Activated B cell treated with CpG ODN at 0.5 μM for 24 hours (primary cell): ENCODE measurements at regions of chr19 and their contacts with region 1.

Region 1: GRCh38 chr19:48321622-48322591 is 3.4 kb upstream of the EMP3 start:
- DNase-seq: peak; percentile 99
- ATAC-seq: peak; percentile 66
- H3K4me3 Mint-ChIP-seq: peak overlapping the region; percentile 94
- H3K27ac Mint-ChIP-seq: peak overlapping the region; percentile 99
- H3K4me1 Mint-ChIP-seq: peaks cover 63% of the 10 kb centered on the region
- H3K27me3 Mint-ChIP-seq: no peaks in the 10 kb centered on the region
- CTCF ChIP-seq: no peak

Region 2: GRCh38 chr19:48271531-48272151 is 50.3 kb before region 1 on chr19:
- CTCF ChIA-PET with region 1: interaction called, 3 read pairs
- POLR2A ChIA-PET with region 1: interaction called, 6 read pairs
- intact Hi-C with region 1: loop called (anchors 1 kb)
- DNase-seq: peak; percentile 37
- ATAC-seq: peak; percentile 75
- H3K4me3 Mint-ChIP-seq: peak overlapping the region; percentile 95
- H3K27ac Mint-ChIP-seq: peak overlapping the region; percentile 80
- H3K4me1 Mint-ChIP-seq: peaks cover 14% of the 10 kb centered on the region
- H3K27me3 Mint-ChIP-seq: no peaks in the 10 kb centered on the region
- CTCF ChIP-seq: no peak

Region 3: DNA sequence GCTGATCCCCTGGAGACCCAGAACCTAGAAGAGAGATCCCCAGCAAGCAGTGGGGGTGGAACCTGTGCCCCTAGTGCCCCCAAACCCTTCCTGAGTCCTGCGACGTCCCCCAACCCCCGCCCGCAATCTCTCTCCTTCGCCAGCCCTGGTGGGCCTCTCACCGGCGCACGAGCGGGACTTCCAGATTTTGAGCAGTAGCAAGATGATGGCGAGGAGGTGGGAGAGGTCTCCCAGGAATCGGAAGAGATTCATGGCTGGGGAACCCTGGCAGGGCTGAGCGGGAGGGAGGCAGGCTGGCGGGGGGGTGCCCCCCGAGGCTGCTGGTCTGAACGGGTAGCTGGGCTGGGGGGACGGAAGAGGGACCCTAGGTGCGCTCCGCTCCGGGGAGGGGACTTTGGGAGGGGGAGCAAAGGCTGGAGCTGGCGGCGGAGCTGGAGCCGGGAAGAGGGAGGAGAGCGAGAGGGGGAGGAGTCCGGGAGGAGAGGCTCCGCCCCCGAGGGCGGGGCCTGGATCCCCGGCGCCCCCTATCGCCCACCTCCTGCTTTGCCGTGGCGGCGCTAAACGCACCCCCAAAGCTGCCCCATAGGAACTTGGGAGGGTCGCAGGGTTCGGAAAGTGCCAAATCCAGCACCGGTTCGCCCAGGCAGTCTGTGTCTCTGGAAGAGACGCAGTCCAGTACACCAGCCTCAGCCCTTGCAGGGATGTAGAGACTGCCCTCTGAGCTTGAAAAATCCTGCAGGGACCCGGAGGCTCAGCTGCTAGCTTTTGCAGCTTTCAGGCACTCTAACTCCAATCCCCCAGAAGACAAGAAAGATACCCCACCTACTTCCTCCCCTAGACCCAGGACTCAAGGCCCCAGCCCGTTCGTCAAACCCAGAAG is 69.4 kb after region 1 on chr19 and contains the start of gene KDELR1:
- CTCF ChIA-PET with region 1: interaction called, 6 read pairs
- POLR2A ChIA-PET with region 1: interaction called, 24 read pairs
- intact Hi-C with region 1: no loop called
- DNase-seq: peak; percentile 83
- ATAC-seq: peak; percentile 84
- H3K4me3 Mint-ChIP-seq: peak within 1 kb of the TSS; percentile 96
- H3K27ac Mint-ChIP-seq: peak within 1 kb of the TSS; percentile 88
- H3K4me1 Mint-ChIP-seq: peaks cover 35% of the 10 kb centered on the region
- H3K27me3 Mint-ChIP-seq: peaks cover 19% of the 10 kb centered on the region
- CTCF ChIP-seq: peak; percentile 51
- total RNA-seq, gene KDELR1: 50.8 and 51.9 TPM in 2 replicates

Region 4: DNA sequence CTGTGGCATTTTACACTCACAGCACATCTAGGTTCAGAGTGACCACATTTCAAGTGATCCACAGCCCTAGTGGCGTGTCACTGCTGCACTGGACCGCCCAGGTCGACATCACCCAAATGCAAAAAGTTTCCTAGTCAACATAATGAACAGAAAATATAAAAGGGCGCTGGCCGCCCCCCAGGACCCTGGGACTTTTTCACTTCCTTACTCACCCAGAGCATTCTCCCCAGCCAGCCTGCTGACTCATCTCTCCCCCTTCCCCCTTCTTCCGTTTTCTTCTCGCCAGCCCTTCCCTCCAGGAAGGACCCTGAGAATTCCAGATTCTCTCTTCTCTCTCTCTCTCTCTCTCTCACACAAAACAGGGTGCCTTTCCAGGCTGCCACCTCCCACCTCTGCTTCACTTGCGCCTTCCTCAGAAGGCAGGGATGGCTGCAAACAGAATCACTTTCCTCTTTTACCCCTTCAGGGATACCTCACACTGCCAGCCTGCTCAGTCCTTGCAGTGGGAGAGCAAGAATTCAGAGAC is 102.8 kb after region 1 on chr19:
- CTCF ChIA-PET with region 1: no interaction called
- POLR2A ChIA-PET with region 1: no interaction called
- intact Hi-C with region 1: no loop called
- DNase-seq: no peak
- ATAC-seq: peak; percentile 77
- H3K4me3 Mint-ChIP-seq: peak overlapping the region; percentile 20
- H3K27ac Mint-ChIP-seq: peak overlapping the region; percentile 13
- H3K4me1 Mint-ChIP-seq: peaks cover 6% of the 10 kb centered on the region
- H3K27me3 Mint-ChIP-seq: peaks cover 5% of the 10 kb centered on the region
- CTCF ChIP-seq: no peak

Region 5: DNA sequence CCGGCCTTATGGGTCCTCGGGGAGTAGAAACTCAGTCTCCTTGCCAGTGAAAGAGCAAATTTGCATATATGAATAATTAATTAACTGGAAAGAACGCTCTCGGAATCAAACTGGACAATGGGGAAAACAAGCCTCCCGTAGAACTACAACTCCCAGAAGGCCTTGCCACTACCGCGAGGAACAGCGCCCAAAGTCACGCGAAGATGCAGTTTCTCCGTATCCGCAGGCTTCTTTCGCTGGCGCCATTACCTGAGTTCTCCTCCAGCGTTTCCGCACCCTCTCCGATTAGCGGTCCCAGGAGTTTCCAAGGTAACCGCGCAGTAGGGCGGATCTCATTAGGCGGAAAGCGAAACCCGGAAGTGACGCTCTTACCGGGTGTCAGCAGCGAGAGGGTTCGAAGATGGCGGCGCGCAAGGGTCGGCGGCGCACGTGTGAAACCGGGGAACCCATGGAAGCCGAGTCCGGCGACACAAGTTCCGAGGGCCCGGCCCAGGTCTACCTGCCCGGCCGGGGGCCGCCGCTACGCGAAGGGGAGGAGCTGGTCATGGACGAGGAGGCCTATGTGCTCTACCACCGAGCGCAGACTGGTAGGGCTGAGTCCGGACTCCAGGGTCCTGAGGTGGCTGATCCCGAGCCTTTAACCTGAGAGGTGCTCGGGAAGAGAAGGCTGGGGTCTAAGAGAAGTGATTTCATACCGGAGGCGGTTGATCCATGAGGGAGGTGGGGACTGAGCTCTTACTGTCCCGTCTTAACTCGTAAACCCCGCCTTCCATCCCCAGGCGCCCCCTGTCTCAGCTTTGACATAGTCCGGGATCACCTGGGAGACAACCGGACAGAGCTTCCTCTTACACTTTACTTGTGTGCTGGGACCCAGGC is 123.9 kb after region 1 on chr19 and contains the start of gene GRWD1:
- CTCF ChIA-PET with region 1: no interaction called
- POLR2A ChIA-PET with region 1: interaction called, 7 read pairs
- intact Hi-C with region 1: loop called (anchors 1 kb)
- DNase-seq: peak; percentile 78
- ATAC-seq: peak; percentile 89
- H3K4me3 Mint-ChIP-seq: peak within 1 kb of the TSS; percentile 96
- H3K27ac Mint-ChIP-seq: peak within 1 kb of the TSS; percentile 95
- H3K4me1 Mint-ChIP-seq: peaks cover 35% of the 10 kb centered on the region
- H3K27me3 Mint-ChIP-seq: peaks cover 19% of the 10 kb centered on the region
- CTCF ChIP-seq: no peak
- total RNA-seq, gene GRWD1: 63.4 and 71.4 TPM in 2 replicates

Region 6: GRCh38 chr19:48492925-48493717 is 171.2 kb after region 1 on chr19:
- CTCF ChIA-PET with region 1: no interaction called
- POLR2A ChIA-PET with region 1: interaction called, 3 read pairs
- intact Hi-C with region 1: loop called (anchors 2 kb)
- DNase-seq: peak; percentile 71
- ATAC-seq: peak; percentile 69
- H3K4me3 Mint-ChIP-seq: peak overlapping the region; percentile 74
- H3K27ac Mint-ChIP-seq: no peak overlapping the region
- H3K4me1 Mint-ChIP-seq: peaks cover 42% of the 10 kb centered on the region
- H3K27me3 Mint-ChIP-seq: peaks cover 33% of the 10 kb centered on the region
- CTCF ChIP-seq: no peak

Region 7: GRCh38 chr19:48513289-48514122 is 191.6 kb after region 1 on chr19:
- CTCF ChIA-PET with region 1: no interaction called
- POLR2A ChIA-PET with region 1: no interaction called
- intact Hi-C with region 1: no loop called
- DNase-seq: peak; percentile 51
- ATAC-seq: peak; percentile 90
- H3K4me3 Mint-ChIP-seq: no peak overlapping the region
- H3K27ac Mint-ChIP-seq: peak overlapping the region; percentile 69
- H3K4me1 Mint-ChIP-seq: peaks cover 17% of the 10 kb centered on the region
- H3K27me3 Mint-ChIP-seq: peaks cover 2% of the 10 kb centered on the region
- CTCF ChIP-seq: no peak

Region 8: DNA sequence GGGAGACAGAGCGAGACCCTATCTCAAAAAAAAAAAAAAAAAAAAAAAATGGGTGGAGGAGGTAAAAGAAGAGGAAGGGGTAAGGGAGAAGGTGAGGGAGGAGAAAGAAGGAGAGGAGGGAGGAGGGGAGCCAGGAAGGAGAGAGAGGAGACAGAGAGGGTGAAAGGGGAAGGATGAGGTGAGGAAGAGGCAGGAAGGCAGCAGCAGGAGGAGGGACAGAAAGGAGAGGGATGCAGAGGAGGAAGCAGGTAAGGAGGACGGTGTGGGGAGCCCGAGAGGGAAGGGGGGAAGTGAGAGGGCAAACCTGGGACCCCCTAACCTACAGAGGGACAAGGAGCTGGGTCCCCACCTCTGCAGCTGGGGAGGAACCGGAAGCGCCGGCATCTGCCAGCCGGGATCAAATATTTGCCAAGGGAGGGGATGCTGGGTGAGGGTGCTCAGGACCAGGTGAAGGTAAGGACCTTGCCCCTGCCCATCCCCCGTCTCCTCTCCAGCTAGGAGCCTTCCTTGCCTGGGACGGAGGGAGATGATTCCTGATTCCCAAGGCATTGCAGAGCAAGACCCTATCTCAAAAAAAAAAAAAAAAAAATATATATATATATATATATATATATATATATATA is 280.3 kb after region 1 on chr19:
- CTCF ChIA-PET with region 1: no interaction called
- POLR2A ChIA-PET with region 1: no interaction called
- intact Hi-C with region 1: no loop called
- DNase-seq: no peak
- ATAC-seq: no peak
- H3K4me3 Mint-ChIP-seq: no peak overlapping the region
- H3K27ac Mint-ChIP-seq: no peak overlapping the region
- H3K4me1 Mint-ChIP-seq: no peaks in the 10 kb centered on the region
- H3K27me3 Mint-ChIP-seq: no peaks in the 10 kb centered on the region
- CTCF ChIP-seq: no peak

Region 9: DNA sequence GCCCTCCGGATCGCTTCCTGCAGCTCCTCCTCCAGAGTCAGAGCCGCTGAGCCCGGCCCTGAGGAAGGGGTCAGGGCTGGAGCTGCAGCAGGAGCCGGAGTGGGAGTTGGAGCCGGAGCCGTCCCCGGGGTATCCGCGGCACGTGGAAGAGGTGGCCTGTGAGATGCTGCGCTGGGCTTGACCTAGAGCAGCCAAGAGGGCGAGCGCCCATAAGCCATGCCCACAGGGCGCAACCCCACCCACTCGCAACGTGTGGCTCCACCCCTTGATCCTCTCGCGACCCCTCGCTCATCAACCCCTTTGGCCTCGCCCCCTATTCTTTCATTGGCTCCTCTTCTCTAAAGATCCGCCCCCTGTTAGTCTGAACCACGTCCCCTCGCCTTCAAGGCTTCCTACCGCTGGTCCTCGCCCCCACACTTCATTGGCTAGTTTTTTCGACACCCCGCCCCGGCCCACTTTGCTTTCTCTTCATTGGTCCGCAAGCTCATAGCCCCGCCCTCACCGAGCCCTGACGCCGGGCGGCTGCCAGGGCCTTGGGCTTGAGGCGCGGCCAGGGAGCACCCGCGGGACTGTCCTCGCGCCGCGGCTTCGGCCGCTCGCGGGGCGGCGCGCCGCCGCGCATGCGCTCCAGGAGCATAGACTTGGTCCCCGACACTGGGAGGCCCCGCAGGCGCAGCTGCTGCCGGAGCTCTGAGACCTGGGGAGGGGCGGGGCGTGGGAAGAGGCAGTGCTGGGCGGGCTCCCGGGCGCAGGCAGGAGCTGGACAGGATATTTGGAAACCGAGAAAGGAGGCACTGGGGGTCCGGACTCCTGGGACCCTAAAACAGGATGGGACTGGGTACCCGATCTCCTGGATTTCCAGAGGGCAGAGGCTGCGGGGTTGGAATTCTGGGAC is 392.2 kb after region 1 on chr19:
- CTCF ChIA-PET with region 1: no interaction called
- POLR2A ChIA-PET with region 1: no interaction called
- intact Hi-C with region 1: loop called (anchors 1 kb)
- DNase-seq: peak; percentile 94
- ATAC-seq: peak; percentile 91
- H3K4me3 Mint-ChIP-seq: peak overlapping the region; percentile 81
- H3K27ac Mint-ChIP-seq: peak overlapping the region; percentile 77
- H3K4me1 Mint-ChIP-seq: peaks cover 25% of the 10 kb centered on the region
- H3K27me3 Mint-ChIP-seq: no peaks in the 10 kb centered on the region
- CTCF ChIP-seq: no peak